ENCODE measurements at regions of chr19 and their contacts with region 1.

Region 1: GRCh38 chr19:506404-507285 is 652 bp upstream of the TPGS1 start:
- DNase-seq: peak; percentile 96
- H3K4me3 Mint-ChIP-seq: peak overlapping the region; percentile 90
- H3K27ac Mint-ChIP-seq: peak overlapping the region; percentile 98
- H3K4me1 Mint-ChIP-seq: peaks cover 51% of the 10 kb centered on the region
- H3K27me3 Mint-ChIP-seq: peaks cover 4% of the 10 kb centered on the region

Region 2: GRCh38 chr19:383922-384798 is 122.5 kb before region 1 on chr19:
- CTCF ChIA-PET with region 1: interaction called, 14 read pairs
- DNase-seq: no peak
- H3K4me3 Mint-ChIP-seq: no peak overlapping the region
- H3K27ac Mint-ChIP-seq: no peak overlapping the region
- H3K4me1 Mint-ChIP-seq: peaks cover 14% of the 10 kb centered on the region
- H3K27me3 Mint-ChIP-seq: peaks cover 70% of the 10 kb centered on the region

Region 3: DNA sequence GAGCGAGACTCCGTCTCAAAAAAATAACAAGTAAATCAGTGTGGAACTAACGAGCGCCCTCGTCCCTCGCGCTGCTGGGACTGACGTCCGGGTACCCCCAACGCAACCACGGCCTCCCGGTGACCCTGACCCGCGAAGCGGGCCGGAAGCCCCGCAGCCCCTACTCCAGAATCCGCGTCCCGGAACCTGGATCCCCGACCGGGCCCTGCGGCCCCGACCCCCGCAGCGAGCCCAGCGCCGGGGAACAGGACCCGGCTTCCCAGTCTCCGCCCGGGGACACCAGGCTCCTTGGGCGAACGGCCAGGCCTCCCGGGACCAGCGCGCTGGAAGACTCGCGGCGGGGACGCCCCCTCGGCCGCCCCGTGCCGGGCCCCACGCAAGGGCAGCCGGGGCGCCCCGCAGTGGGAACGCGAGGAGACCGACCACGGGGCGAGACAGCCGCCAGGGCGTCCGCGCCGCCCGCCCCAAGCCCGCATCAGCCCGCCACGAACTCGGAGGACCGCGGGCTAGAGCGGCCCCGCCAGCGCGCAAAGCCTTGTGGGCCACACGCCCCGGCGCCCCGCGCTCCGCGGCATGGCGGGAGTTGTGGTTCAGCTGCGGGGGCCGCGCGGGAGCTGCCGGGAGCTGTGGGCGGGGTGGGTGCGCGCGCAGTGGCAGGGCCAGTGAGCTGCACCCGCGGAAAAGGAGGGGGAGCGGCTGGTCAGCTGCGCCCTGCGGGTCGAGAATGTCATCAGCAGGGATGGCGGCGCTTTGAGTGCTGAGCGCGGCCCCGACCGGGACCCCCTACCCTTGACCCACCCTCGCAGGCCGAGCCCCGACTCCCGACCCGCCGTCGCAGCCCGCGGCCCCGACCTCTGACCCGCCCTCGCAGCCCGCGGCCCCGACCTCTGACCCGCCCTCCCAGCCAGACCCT is 17.9 kb before region 1 on chr19:
- CTCF ChIA-PET with region 1: interaction called, 18 read pairs
- DNase-seq: peak; percentile 94
- H3K4me3 Mint-ChIP-seq: peak overlapping the region; percentile 79
- H3K27ac Mint-ChIP-seq: peak overlapping the region; percentile 85
- H3K4me1 Mint-ChIP-seq: peaks cover 18% of the 10 kb centered on the region
- H3K27me3 Mint-ChIP-seq: peaks cover 27% of the 10 kb centered on the region

Region 4: DNA sequence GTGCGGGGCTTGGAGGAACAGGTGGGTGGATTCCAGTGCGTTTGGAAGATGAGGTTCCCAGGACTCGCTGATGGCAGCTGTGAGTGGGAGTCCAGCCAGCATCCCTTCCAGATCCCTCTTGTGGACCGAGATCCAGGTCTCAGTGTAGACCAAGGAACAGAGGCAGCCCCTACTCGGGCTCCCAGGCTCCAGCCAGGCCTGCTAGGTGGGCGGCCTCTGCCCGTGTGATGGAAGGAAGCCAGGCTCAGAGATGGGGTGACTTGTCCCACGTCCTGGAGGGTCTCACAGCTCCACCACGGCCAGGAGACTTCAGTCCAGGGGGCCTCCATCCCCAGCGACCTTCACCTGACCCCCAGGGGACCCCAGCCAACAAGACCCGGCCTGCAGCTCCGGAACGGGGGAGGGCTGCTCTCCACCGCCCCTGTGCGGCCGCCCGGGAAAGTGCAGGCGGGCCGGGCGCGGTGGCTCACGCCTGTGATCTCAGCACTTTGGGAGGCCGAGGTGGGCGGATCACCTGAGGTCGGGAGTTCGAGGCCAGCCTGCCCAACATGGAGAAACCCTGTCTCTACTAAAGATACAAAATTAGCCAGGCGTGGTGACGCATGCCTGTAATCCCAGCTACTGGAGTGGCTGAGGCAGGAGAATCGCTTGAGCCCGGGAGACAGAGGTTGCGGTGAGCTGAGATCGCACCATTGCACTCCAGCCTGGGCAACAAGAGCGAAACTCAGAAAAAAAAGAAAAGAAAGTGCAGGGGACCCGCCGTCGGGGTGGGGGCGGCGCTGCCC is 11.1 kb before region 1 on chr19:
- CTCF ChIA-PET with region 1: interaction called, 18 read pairs
- DNase-seq: peak; percentile 63
- H3K4me3 Mint-ChIP-seq: no peak overlapping the region
- H3K27ac Mint-ChIP-seq: no peak overlapping the region
- H3K4me1 Mint-ChIP-seq: peaks cover 9% of the 10 kb centered on the region
- H3K27me3 Mint-ChIP-seq: peaks cover 62% of the 10 kb centered on the region

Region 5: DNA sequence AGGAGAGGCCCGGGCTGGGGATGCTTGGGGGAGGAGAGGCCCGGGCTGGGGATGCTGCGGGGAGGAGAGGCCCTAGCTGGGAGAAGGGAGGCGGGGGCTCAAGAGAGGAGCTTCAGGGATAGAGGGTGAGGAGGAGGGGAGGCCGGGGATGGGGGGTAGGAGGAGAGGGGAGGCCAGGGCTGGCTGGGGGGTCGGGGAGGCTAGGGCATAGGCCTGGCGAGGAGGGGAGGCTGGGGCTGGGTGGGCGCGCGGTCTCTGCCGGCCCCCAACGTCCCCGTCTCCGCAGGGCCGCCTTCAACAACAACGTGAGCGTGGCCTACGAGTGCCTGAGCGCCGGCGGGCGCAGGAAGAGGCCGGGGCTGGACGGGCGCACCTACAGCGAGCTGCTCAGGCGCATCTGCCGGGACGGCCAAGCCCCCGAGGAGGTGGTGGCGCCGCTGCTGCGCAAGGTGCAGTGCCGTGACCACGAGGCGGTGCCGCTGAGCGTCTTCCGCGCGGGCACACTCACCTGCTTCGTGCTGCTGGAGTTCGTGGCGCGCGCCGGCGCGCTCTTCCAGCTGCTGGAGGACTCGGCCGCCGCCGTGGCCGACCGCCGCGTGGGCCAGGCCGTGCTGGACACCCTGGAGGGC is 12.1 kb after region 1 on chr19:
- CTCF ChIA-PET with region 1: interaction called, 18 read pairs
- DNase-seq: peak; percentile 69
- H3K4me3 Mint-ChIP-seq: no peak overlapping the region
- H3K27ac Mint-ChIP-seq: no peak overlapping the region
- H3K4me1 Mint-ChIP-seq: peaks cover 13% of the 10 kb centered on the region
- H3K27me3 Mint-ChIP-seq: peaks cover 4% of the 10 kb centered on the region

Region 6: DNA sequence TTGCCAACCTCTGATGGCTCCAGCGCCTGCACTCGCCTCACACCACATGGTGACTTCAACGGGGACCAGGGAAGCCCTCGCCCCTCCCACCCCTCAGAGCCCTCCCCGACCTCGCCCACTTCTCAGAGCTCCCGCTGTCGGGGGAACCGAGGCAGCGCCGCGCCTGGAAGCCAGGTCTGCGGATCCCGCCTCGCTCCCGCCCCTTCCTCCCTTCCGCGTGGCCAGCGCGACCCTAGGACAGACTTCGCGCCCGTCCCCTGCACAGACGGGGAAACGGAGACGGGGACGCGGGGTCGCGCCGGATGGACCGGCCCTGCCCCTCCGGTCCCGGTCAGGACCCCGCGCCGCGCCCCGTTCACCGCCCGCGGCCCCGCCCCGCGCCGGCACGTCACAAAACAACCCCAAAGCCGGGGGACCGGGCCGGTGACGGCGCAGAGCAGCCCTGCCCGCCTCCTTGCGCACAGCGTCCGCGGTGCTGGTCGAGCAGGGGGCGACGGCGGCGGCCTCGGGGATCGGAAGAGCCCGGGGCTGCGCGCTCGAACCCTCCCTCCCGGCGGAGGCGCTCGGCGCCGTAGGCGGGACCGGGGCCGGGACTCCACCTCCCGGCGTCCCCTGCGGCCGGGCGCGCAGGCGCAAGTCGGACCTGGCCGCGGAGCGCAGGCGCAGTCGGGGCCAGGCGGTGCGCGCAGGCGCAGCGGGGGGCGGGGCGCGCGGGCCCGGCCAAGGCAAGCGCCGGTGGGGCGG is 24.5 kb after region 1 on chr19:
- CTCF ChIA-PET with region 1: interaction called, 71 read pairs
- DNase-seq: peak; percentile 88
- H3K4me3 Mint-ChIP-seq: peak overlapping the region; percentile 79
- H3K27ac Mint-ChIP-seq: peak overlapping the region; percentile 88
- H3K4me1 Mint-ChIP-seq: peaks cover 23% of the 10 kb centered on the region
- H3K27me3 Mint-ChIP-seq: peaks cover 22% of the 10 kb centered on the region

Region 7: DNA sequence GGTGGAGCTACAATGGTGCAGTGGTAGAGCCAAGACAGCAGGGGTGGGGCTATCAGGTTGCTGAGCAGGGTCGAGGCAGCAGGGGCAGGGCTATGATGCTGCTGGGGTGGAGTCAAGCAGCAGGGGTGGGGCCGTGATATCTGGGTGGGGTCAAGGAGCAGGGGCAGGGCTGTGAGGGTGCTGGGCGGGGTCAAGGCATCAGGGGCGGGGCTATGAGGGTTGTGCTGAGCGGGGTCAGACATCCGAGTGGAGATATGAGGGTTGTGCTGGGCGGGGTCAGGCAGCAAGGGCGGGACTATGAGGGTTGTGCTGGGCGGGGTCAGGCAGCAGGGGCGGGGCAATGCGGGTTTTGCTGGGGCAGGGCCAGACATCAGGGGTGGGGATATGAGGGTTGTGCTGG is 97.7 kb after region 1 on chr19:
- CTCF ChIA-PET with region 1: no interaction called
- DNase-seq: peak; percentile 59
- H3K4me3 Mint-ChIP-seq: no peak overlapping the region
- H3K27ac Mint-ChIP-seq: no peak overlapping the region
- H3K4me1 Mint-ChIP-seq: peaks cover 3% of the 10 kb centered on the region
- H3K27me3 Mint-ChIP-seq: no peaks in the 10 kb centered on the region

Measured in activated naive CD4-positive, alpha-beta T cell treated with anti-CD3 and anti-CD28 coated beads, Interleukin-2, amount 10 ng/mL, durations not matched to agents 7 days and 5 days (primary cell).